BJ (cell line): ENCODE measurements at regions of chr3 and their contacts with region 1.

Region 1: GRCh38 chr3:170450039-170450438 is 31.4 kb downstream of the CLDN11 start:
- DNase-seq: no peak
- H3K4me3 ChIP-seq: no peak overlapping the region
- H3K27me3 ChIP-seq: no peaks in the 10 kb centered on the region; the same call in 1 of the 2 replicates
- CTCF ChIP-seq: no peak

Region 2: DNA sequence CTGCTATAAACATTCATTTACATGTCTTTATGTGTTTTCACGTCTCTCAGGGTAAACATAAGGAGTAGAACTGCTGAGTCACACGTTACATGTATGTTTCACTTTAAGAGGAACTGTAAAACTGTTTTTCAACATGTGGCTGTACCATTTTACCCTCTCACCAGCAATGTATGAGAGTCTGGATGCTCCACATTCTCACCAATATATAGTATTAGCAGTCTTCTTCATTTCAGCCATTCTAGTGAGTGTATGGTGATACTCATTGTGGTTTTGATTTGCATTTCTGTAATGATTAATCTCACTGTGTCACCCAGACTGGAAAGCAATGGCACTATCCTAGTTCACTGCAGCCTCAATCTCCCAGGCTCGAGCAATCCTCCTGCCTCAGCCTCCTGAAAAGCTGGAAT is 305.6 kb before region 1 on chr3:
- CTCF ChIA-PET with region 1: no interaction called
- POLR2A ChIA-PET with region 1: no interaction called
- DNase-seq: no peak
- H3K4me3 ChIP-seq: no peak overlapping the region
- H3K27me3 ChIP-seq: no peaks in the 10 kb centered on the region
- CTCF ChIP-seq: no peak

Region 3: DNA sequence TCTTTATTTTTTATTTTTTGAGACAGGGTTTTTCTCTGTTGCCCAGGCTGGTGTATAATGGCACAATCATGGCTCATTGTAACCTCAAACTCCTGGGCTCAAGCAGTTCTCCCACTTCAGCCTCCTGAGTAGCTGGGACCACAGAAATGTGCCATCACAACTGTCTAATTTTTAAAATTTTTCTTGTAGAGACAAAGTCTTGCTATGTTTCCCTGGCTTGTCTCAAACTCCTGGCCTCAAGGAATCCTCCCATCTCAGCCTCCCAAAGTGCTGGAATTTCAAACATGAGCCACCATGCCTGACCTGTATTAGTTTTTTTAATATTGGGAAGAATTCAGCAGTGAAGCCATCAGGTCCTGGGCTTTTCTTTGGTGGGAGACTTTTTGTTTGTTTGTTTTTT is 44.9 kb before region 1 on chr3:
- CTCF ChIA-PET with region 1: no interaction called
- POLR2A ChIA-PET with region 1: no interaction called
- DNase-seq: no peak
- H3K4me3 ChIP-seq: no peak overlapping the region
- H3K27me3 ChIP-seq: no peaks in the 10 kb centered on the region
- CTCF ChIP-seq: no peak

Region 4: GRCh38 chr3:170563712-170564423 is 113.8 kb after region 1 on chr3:
- CTCF ChIA-PET with region 1: no interaction called
- POLR2A ChIA-PET with region 1: no interaction called
- DNase-seq: peak; percentile 12
- H3K4me3 ChIP-seq: no peak overlapping the region
- H3K27me3 ChIP-seq: no peaks in the 10 kb centered on the region
- CTCF ChIP-seq: no peak

Region 5: GRCh38 chr3:172129870-172130683 is 1680.0 kb after region 1 on chr3:
- CTCF ChIA-PET with region 1: no interaction called
- POLR2A ChIA-PET with region 1: interaction called, 10 read pairs
- DNase-seq: peak; percentile 98
- H3K4me3 ChIP-seq: no peak overlapping the region
- H3K27me3 ChIP-seq: no peaks in the 10 kb centered on the region
- CTCF ChIP-seq: no peak